Natural killer cell (primary cell): ENCODE measurements at regions of chr14 and their contacts with region 1.

Region 1: GRCh38 chr14:69107407-69108003 is 45.4 kb downstream of the DCAF5 start:
- DNase-seq: peak in 1 of 2 donors; percentile 70
- ATAC-seq: peak; percentile 49 to 74 (median 68)
- H3K4me3 ChIP-seq: no peak overlapping the region
- H3K4me3 Mint-ChIP-seq: no peak overlapping the region
- H3K27ac ChIP-seq: no peak overlapping the region
- H3K27ac Mint-ChIP-seq: no peak overlapping the region
- H3K4me1 ChIP-seq: no peaks in the 10 kb centered on the region
- H3K4me1 Mint-ChIP-seq: peaks cover 7 to 23% of the 10 kb centered on the region in 2 donors
- H3K27me3 ChIP-seq: no peaks in the 10 kb centered on the region
- H3K27me3 Mint-ChIP-seq: no peaks in the 10 kb centered on the region
- CTCF ChIP-seq: peak; percentile 26

Region 2: GRCh38 chr14:68598621-68599447 is 508.7 kb before region 1 on chr14:
- intact Hi-C with region 1: no loop called
- DNase-seq: no peak
- ATAC-seq: peak in 2 of 3 donors; percentile 29 to 32
- H3K4me3 ChIP-seq: no peak overlapping the region
- H3K4me3 Mint-ChIP-seq: no peak overlapping the region
- H3K27ac ChIP-seq: peak overlapping the region; percentile 36
- H3K27ac Mint-ChIP-seq: no peak overlapping the region
- H3K4me1 ChIP-seq: peaks cover 5% of the 10 kb centered on the region
- H3K4me1 Mint-ChIP-seq: peaks cover 0 to 13% of the 10 kb centered on the region in 2 donors
- H3K27me3 ChIP-seq: no peaks in the 10 kb centered on the region
- H3K27me3 Mint-ChIP-seq: no peaks in the 10 kb centered on the region
- CTCF ChIP-seq: no peak

Region 3: GRCh38 chr14:68862954-68863594 is 244.4 kb before region 1 on chr14:
- intact Hi-C with region 1: loop called (anchors 1 kb)
- DNase-seq: peak; percentile 59 to 76
- ATAC-seq: peak in 2 of 3 donors; percentile 70
- H3K4me3 ChIP-seq: no peak overlapping the region
- H3K4me3 Mint-ChIP-seq: no peak overlapping the region
- H3K27ac ChIP-seq: no peak overlapping the region
- H3K27ac Mint-ChIP-seq: no peak overlapping the region
- H3K4me1 ChIP-seq: no peaks in the 10 kb centered on the region
- H3K4me1 Mint-ChIP-seq: no peaks in the 10 kb centered on the region
- H3K27me3 ChIP-seq: no peaks in the 10 kb centered on the region
- H3K27me3 Mint-ChIP-seq: no peaks in the 10 kb centered on the region
- CTCF ChIP-seq: peak; percentile 64

Region 4: GRCh38 chr14:68874746-68875155 is 232.8 kb before region 1 on chr14:
- intact Hi-C with region 1: no loop called
- DNase-seq: no peak
- ATAC-seq: peak in 2 of 3 donors; percentile 40 to 46
- H3K4me3 ChIP-seq: peak overlapping the region; percentile 5
- H3K4me3 Mint-ChIP-seq: no peak overlapping the region
- H3K27ac ChIP-seq: no peak overlapping the region
- H3K27ac Mint-ChIP-seq: no peak overlapping the region
- H3K4me1 ChIP-seq: no peaks in the 10 kb centered on the region
- H3K4me1 Mint-ChIP-seq: peaks cover 0 to 4% of the 10 kb centered on the region in 2 donors
- H3K27me3 ChIP-seq: no peaks in the 10 kb centered on the region
- H3K27me3 Mint-ChIP-seq: no peaks in the 10 kb centered on the region
- CTCF ChIP-seq: no peak

Region 5: GRCh38 chr14:68911594-68912227 is 195.8 kb before region 1 on chr14:
- intact Hi-C with region 1: loop called (anchors 5 kb)
- DNase-seq: peak; percentile 55 to 90
- ATAC-seq: peak; percentile 95 to 100 (median 99)
- H3K4me3 ChIP-seq: no peak overlapping the region
- H3K4me3 Mint-ChIP-seq: no peak overlapping the region
- H3K27ac ChIP-seq: no peak overlapping the region
- H3K27ac Mint-ChIP-seq: no peak overlapping the region
- H3K4me1 ChIP-seq: peaks cover 4% of the 10 kb centered on the region
- H3K4me1 Mint-ChIP-seq: peaks cover 6 to 7% of the 10 kb centered on the region in 2 donors
- H3K27me3 ChIP-seq: no peaks in the 10 kb centered on the region
- H3K27me3 Mint-ChIP-seq: peaks cover 0 to 2% of the 10 kb centered on the region in 2 donors
- CTCF ChIP-seq: peak; percentile 95